Activated CD4-positive, alpha-beta T cell treated with anti-CD3 and anti-CD28 coated beads for 36 hours (primary cell): ENCODE measurements at regions of chr5 and their contacts with region 1.

Region 1: DNA sequence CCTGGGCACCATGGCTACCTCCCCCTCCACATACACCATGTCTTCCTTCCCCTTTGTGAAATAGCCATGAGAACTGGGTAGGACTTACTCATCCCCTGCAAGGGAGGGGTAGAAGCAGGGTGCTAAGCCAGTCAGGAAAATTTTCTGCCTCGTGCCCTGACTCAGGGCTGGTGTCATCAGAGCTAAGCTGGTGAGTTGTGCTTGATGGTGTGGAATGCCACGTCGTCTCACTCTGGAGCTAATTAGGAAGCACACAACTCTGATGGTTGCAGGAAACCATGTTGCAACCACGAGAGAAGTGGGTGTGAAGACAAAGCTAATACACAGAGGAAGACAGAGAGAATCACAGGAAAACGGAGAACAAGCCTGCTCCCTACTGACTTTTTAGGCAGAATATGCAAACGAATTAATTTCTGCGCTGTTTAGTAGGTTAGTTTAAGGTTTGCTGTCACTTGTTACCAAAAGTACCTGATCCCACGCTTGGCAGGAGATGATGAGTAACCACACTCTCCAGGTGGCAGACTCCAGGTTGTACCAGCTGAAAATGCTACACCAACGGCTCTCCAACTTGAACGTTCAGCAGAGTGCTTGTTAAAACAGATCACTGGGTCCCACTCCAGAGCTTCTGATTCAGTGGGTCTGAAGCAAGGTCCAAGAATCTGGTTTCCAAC is 54.5 kb downstream of the STK10 start:
- DNase-seq: peak; percentile 83
- ATAC-seq: peak; percentile 99
- H3K4me3 Mint-ChIP-seq: peak overlapping the region; percentile 11
- H3K27ac Mint-ChIP-seq: peak overlapping the region; percentile 99
- H3K4me1 Mint-ChIP-seq: peaks cover 59% of the 10 kb centered on the region
- H3K27me3 Mint-ChIP-seq: no peaks in the 10 kb centered on the region

Region 2: DNA sequence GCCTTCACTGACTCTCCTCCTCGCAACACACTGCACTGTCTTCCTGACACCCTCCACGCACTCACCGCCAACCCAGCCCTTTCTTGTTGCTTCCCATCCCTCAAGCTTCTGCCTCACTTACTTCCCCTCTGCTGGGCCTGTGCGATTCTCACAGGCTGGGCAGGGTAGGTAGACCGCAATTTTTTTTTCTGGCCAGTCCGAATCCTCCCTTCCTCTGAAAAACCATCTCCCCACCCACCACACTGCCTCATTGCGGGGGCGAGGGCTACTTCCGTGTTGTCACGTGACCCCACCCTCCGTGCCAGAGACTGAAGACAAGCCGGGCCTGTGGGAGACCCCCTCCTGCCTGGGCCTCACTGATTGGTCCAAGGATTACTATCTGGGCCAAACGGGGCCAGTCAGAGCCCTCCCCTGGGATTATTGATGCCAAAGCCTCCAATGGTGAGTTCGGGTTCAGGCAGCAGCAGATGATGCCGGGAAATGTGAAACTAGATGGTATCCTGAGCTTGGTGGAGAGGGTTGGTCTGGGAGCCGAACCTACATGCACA is 18.5 kb before region 1 on chr5:
- CTCF ChIA-PET with region 1: interaction called, 3 read pairs
- POLR2A ChIA-PET with region 1: interaction called, 4 read pairs
- intact Hi-C with region 1: loop called (anchors 1 to 2 kb)
- DNase-seq: peak; percentile 92
- ATAC-seq: peak; percentile 73
- H3K4me3 Mint-ChIP-seq: peak overlapping the region; percentile 80
- H3K27ac Mint-ChIP-seq: peak overlapping the region; percentile 98
- H3K4me1 Mint-ChIP-seq: peaks cover 74% of the 10 kb centered on the region
- H3K27me3 Mint-ChIP-seq: no peaks in the 10 kb centered on the region

Region 3: DNA sequence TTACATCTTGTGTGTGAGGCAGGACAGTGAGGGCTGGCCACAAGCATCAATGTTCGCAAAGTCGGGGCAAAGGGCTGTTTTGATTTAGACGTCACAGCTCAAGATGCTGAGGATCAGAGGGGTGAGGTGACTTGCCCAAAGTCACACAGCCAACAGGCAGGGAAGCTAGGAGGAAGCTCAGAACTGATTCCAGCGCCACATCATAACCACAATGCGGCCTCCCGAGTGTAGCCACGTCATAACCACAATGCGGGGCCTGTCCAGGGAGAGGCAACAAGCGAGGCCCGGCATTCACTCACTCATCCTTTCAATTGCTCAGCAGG is 40.3 kb after region 1 on chr5:
- CTCF ChIA-PET with region 1: interaction called, 10 read pairs
- POLR2A ChIA-PET with region 1: interaction called, 5 read pairs
- intact Hi-C with region 1: loop called (anchors 1 to 5 kb)
- DNase-seq: peak; percentile 91
- ATAC-seq: peak; percentile 20
- H3K4me3 Mint-ChIP-seq: peak overlapping the region; percentile 75
- H3K27ac Mint-ChIP-seq: peak overlapping the region; percentile 99
- H3K4me1 Mint-ChIP-seq: peaks cover 96% of the 10 kb centered on the region
- H3K27me3 Mint-ChIP-seq: no peaks in the 10 kb centered on the region